Activated CD4-positive, alpha-beta T cell treated with anti-CD3 and anti-CD28 coated beads, Interleukin-2, amount 10 ng/mL, durations not matched to agents 24 days and 14 days (primary cell): ENCODE measurements at regions of chr4 and their contacts with region 1.

Region 1: DNA sequence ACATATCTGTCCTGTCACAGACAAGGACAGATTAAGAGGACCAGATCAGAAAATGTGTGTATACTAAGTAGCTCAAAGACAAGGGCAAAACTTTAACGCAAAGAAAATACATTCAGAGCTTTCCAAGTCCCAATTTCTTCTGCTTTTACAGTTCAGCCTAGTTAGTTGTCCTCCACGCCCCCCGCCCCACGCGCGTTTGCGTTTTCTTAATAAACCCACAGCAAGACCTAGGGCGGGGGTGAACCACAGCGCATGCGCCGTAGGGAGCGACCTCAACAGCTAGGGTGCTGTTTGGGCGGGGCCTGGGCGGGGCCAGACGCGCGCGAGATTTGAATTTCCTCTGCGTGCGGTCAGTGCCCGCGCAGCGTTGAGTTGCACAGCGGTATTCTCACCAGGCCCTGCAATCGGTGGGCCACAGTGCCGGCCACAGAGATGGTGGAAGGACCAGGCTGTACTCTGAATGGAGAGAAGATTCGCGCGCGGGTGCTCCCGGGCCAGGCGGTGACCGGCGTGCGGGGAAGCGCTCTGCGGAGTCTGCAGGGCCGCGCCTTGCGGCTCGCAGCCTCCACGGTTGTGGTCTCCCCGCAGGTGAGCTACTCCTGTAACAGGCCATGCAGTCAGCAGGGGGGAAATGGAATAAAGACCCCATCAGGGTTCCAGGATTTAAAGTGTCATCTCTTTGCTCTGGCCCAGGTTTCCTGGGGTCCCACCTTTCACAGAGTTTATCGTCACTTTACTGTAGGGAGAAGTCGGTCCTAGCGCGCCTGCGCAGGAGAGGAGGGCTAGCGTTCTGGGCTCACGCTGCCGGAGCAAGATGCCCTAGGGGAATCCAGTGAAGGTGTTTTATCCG is at the start of gene NEIL3:
- DNase-seq: peak; percentile 97
- H3K4me3 Mint-ChIP-seq: peak within 1 kb of the TSS; percentile 95
- H3K27ac Mint-ChIP-seq: peak within 1 kb of the TSS; percentile 98
- H3K4me1 Mint-ChIP-seq: peaks cover 48% of the 10 kb centered on the region
- H3K27me3 Mint-ChIP-seq: no peaks in the 10 kb centered on the region
- total RNA-seq, gene NEIL3: 15.5 and 17.0 TPM in 2 replicates

Region 2: DNA sequence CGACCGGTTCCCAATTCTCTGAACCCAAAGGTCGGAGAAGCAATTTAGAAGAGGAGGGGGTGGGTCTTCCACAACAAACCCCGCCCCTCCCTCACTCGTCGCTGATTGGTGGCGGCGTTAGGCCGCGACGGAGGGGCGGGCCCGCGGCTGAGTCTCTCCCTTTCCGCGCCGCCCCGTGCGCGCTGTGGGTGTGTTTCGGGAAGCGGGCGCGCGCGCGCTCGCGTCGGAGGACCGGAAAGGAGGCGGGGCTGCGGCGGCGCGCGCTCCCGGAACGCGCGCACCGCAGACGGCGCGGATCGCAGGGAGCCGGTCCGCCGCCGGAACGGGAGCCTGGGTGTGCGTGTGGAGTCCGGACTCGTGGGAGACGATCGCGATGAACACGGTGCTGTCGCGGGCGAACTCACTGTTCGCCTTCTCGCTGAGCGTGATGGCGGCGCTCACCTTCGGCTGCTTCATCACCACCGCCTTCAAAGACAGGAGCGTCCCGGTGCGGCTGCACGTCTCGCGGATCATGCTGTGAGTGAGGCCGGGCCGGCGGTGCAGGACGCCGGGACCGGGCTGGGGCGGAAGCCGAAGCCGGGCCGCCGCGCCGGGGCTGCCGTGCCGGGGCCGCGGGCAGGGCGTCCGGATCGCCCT is 989.9 kb before region 1 on chr4 and contains the start of gene SPCS3:
- intact Hi-C with region 1: loop called (anchors 2 kb)
- DNase-seq: peak; percentile 99
- H3K4me3 Mint-ChIP-seq: peak within 1 kb of the TSS; percentile 85
- H3K27ac Mint-ChIP-seq: peak within 1 kb of the TSS; percentile 92
- H3K4me1 Mint-ChIP-seq: peaks cover 28% of the 10 kb centered on the region
- H3K27me3 Mint-ChIP-seq: no peaks in the 10 kb centered on the region
- total RNA-seq, gene SPCS3: 186 and 200 TPM in 2 replicates

Region 3: GRCh38 chr4:176622251-176622948 is 687.3 kb before region 1 on chr4:
- intact Hi-C with region 1: no loop called
- DNase-seq: no peak
- H3K4me3 Mint-ChIP-seq: no peak overlapping the region
- H3K27ac Mint-ChIP-seq: no peak overlapping the region
- H3K4me1 Mint-ChIP-seq: no peaks in the 10 kb centered on the region
- H3K27me3 Mint-ChIP-seq: no peaks in the 10 kb centered on the region

Region 4: DNA sequence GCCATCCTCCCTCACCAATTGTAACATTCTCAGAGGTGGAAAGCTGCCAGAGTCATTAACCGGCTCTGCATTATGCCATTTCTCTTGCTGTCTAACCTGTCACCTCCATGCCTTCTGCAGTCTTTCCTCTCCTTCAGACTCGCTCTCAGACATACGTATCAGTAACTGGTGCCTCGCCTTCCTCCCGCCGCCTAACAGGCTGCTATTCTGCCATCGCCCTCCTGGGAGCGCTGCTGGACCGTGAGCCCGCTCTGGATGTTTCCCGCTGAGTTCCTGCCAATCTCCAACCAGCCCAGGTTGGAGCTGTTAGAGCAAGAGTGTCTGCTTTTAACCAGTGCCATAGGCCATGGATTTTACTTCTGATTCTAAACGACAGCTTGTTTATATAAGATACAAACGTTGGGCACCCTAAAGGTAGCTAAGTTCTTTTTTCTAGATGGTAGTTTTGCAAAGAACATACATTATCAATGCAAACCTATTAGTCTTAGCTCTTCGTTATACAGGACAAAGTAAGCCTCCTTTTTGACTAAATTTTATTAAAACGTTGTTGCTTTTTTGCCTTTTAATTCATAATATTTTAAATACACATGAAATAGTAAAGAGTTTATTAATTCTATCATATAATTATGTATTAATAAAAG is 59.6 kb before region 1 on chr4:
- intact Hi-C with region 1: loop called (anchors 2 kb)
- DNase-seq: peak; percentile 93
- H3K4me3 Mint-ChIP-seq: peak overlapping the region; percentile 14
- H3K27ac Mint-ChIP-seq: no peak overlapping the region
- H3K4me1 Mint-ChIP-seq: peaks cover 10% of the 10 kb centered on the region
- H3K27me3 Mint-ChIP-seq: peaks cover 19% of the 10 kb centered on the region

Region 5: GRCh38 chr4:177339477-177340374 is 30.0 kb after region 1 on chr4:
- intact Hi-C with region 1: loop called (anchors 1 kb)
- DNase-seq: peak; percentile 62
- H3K4me3 Mint-ChIP-seq: no peak overlapping the region
- H3K27ac Mint-ChIP-seq: peak overlapping the region; percentile 67
- H3K4me1 Mint-ChIP-seq: peaks cover 16% of the 10 kb centered on the region
- H3K27me3 Mint-ChIP-seq: no peaks in the 10 kb centered on the region

Region 6: GRCh38 chr4:177441803-177442622 is 132.3 kb after region 1 on chr4 and contains the start of gene AGA:
- intact Hi-C with region 1: loop called (anchors 1 kb)
- DNase-seq: peak; percentile 98
- H3K4me3 Mint-ChIP-seq: peak within 1 kb of the TSS; percentile 95
- H3K27ac Mint-ChIP-seq: peak within 1 kb of the TSS; percentile 97
- H3K4me1 Mint-ChIP-seq: peaks cover 27% of the 10 kb centered on the region
- H3K27me3 Mint-ChIP-seq: no peaks in the 10 kb centered on the region
- total RNA-seq, gene AGA: 15.1 and 15.6 TPM in 2 replicates